ENCODE measurements at regions of chr4 and their contacts with region 1.

Region 1: DNA sequence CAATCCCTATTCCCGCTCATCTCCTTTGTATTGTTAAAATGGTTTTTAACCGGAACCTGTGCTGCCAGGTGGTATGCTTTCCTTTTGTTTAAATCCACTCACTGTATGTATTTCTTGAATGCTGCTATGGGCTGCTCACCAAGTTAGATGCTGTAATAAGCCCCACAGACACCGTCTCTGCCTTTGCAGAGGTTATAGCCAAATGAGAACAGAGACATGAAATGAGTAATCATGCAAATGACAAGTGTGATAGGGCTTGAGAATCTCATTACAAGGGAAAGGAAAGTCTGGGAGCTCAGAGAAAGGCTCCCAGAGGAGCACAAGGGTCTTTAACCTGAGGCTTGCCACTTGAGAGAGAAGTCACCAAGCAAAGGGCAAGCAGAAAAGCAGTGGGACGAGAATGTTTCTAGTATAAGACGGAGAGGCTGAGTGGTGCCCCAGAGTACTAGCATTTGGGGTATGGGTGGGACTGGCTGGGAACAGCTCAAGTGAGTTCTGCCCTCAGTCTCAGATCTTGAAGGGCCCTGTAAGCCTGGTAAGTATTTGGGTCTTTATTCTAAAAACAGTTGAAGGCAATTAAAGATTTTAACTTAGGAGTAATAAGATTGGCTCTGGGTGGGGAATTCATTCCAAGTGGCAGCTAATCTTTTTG is 110.8 kb upstream of the H2AZ1 start:
- DNase-seq: no peak
- H3K4me3 ChIP-seq: no peak overlapping the region
- H3K27ac ChIP-seq: no peak overlapping the region
- H3K4me1 ChIP-seq: no peaks in the 10 kb centered on the region
- H3K27me3 ChIP-seq: no peaks in the 10 kb centered on the region
- CTCF ChIP-seq: no peak

Region 2: DNA sequence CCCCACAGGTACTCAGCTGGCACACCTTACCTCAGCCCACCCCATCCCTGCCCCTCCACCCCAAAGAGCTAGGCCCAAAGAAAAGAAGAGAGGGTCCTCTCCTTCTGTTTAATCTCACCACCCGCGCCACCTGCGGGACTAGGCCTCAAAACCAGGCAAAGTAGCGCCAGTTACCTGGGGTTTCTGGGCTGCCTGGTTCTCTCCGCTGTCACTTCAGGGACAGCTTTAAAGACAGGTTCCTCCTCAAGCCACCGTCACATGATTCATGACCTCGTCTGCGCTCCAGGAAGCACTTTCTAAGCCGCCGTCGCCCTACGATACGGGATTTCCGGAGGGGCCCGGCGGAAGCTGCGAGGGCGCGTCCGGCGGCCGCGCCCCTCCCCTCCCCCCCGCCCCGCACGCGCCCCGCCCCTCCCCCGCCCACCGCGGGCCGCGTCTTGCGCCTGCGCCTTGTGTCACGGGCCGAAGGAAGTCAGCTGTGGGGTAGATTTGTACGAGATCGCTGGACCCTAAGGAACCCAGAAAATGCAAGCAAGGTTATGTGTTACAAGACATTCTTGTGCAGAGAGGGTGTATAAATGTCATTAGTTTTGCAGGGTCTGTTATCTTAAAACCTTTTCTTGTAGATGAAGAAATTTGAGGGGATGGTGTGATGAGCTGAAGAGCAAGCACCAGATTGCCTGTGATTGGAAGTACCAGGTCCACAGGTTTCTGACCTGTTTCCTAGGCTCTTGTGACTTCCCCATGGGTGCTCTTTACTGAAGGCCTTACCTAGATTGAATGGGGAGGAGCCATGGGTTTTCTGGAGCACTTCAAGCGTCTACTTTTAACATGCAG is 166.5 kb before region 1 on chr4 and contains the start of gene LAMTOR3:
- CTCF ChIA-PET with region 1: interaction called, 5 read pairs
- dilution Hi-C with region 1: no loop called
- in situ Hi-C with region 1: no loop called
- intact Hi-C with region 1: loop called (anchors 5 kb)
- DNase-seq: peak; percentile 86
- H3K4me3 ChIP-seq: peak within 1 kb of the TSS; percentile 70 to 94 (median 75)
- H3K27ac ChIP-seq: peak within 1 kb of the TSS; percentile 84
- H3K4me1 ChIP-seq: peaks cover 10% of the 10 kb centered on the region
- H3K27me3 ChIP-seq: no peaks in the 10 kb centered on the region
- CTCF ChIP-seq: no peak
- total RNA-seq, gene LAMTOR3: 32.5 to 66.2 TPM

Region 3: DNA sequence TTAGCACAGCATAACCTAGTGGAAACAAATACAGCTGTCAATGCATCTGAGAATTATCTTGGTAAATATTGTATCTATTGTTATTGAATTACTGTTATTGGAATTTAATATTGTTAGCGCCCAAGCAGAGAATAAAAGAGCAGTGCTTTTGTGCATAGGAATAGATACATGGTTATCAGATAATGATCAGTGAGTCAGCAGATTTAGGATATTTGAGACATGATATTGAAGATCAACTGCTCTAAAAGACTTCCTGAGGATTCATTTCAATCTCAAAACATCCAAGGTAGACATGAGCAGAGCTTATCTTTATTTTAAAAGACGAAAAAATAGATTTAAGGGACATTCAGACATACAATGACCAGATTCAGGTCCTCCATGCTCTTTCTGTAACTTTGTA is 100.2 kb before region 1 on chr4:
- CTCF ChIA-PET with region 1: no interaction called
- dilution Hi-C with region 1: no loop called
- in situ Hi-C with region 1: no loop called
- intact Hi-C with region 1: no loop called
- DNase-seq: no peak
- H3K4me3 ChIP-seq: no peak overlapping the region
- H3K27ac ChIP-seq: no peak overlapping the region
- H3K4me1 ChIP-seq: peaks cover 7% of the 10 kb centered on the region
- H3K27me3 ChIP-seq: no peaks in the 10 kb centered on the region
- CTCF ChIP-seq: no peak

Region 4: GRCh38 chr4:99998062-99998867 is 62.6 kb before region 1 on chr4:
- CTCF ChIA-PET with region 1: no interaction called
- dilution Hi-C with region 1: no loop called
- in situ Hi-C with region 1: no loop called
- intact Hi-C with region 1: loop called (anchors 5 kb)
- DNase-seq: peak; percentile 67
- H3K4me3 ChIP-seq: no peak overlapping the region
- H3K27ac ChIP-seq: peak overlapping the region; percentile 2
- H3K4me1 ChIP-seq: peaks cover 5% of the 10 kb centered on the region
- H3K27me3 ChIP-seq: no peaks in the 10 kb centered on the region
- CTCF ChIP-seq: peak; percentile 27 to 41

Measured in mammary epithelial cell (primary cell).